Ascending aorta (tissue), 2 donors: ENCODE measurements at regions of chr12 and their contacts with region 1.

Region 1: GRCh38 chr12:69239352-69239921 is at the start of gene CPSF6:
- DNase-seq: peak; percentile 71 to 96
- H3K4me3 ChIP-seq: peak within 1 kb of the TSS; percentile 92 to 93
- H3K27ac ChIP-seq: peak within 1 kb of the TSS; percentile 90 to 94
- H3K4me1 ChIP-seq: peaks cover 0 to 19% of the 10 kb centered on the region in 2 donors
- H3K27me3 ChIP-seq: no peaks in the 10 kb centered on the region
- CTCF ChIP-seq: no peak
- total RNA-seq, gene CPSF6: 29.2 TPM

Region 2: DNA sequence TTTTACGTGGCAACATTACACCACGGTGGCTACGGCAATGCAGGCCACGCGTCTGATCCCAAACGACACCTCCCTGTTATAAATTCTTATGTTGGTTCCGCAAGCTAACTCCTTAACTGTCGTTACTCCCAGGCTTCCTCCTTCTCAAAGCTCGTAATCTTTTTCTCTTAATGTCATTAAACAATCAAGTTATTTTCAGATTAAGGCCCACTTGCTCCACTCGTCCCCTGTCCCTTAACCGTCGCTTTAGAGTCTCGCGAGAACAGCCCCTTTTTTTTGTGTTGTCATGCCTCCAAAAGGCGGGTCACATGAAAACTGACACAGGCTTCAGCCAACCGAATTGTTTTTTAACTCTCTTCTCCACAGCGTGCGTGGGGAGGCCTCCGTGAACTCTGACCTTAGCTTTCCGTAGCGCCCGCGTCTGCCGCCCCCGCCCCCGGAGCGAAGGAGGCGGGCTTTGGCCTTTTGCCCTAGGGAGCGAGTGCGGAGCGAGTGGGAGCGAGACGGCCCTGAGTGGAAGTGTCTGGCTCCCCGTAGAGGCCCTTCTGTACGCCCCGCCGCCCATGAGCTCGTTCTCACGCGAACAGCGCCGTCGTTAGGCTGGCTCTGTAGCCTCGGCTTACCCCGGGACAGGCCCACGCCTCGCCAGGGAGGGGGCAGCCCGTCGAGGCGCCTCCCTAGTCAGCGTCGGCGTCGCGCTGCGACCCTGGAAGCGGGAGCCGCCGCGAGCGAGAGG is 1970.4 kb before region 1 on chr12 and contains the start of gene CAND1:
- intact Hi-C with region 1: loop called (anchors 5 kb)
- DNase-seq: peak; percentile 90 to 99
- H3K4me3 ChIP-seq: peak within 1 kb of the TSS; percentile 78 to 96
- H3K27ac ChIP-seq: peak within 1 kb of the TSS; percentile 93 to 99
- H3K4me1 ChIP-seq: peaks cover 0 to 30% of the 10 kb centered on the region in 2 donors
- H3K27me3 ChIP-seq: no peaks in the 10 kb centered on the region
- CTCF ChIP-seq: no peak
- total RNA-seq, gene CAND1: 31.6 TPM

Region 3: DNA sequence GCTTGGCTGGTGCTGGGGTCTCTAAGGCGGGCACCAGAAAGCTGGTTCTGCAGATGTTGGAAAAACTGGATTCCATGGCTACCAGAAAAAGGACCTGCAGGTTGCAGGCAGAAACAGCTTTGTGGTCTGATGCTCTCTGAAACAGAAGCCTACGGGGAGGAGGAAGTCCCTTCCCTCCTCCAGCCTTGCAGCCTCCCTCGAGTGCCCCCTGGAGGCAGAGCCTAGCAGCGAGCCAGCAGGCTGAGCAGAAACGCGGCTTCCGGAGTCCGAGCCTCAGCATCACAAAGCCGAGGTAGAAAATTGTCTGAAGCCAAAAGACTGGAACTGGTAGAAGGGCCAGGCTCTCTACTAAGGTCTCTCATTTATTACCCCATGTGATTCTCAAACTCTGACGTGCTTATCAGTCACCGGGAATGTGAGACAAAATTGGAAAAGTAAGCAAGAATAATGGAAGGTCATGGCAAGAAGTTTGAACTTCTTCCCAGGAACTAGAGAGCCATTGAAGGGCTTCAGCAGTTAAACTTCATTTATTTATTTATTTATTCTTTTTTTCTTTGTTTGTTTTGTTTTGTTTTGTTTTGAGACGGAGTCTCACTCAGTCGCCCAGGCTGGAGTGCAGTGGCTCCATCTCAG is 82.3 kb before region 1 on chr12:
- intact Hi-C with region 1: loop called (anchors 5 kb)
- DNase-seq: peak; percentile 21 to 87
- H3K4me3 ChIP-seq: no peak overlapping the region
- H3K27ac ChIP-seq: no peak overlapping the region
- H3K4me1 ChIP-seq: peaks cover 0 to 4% of the 10 kb centered on the region in 2 donors
- H3K27me3 ChIP-seq: peaks cover 3% of the 10 kb centered on the region
- CTCF ChIP-seq: peak; percentile 34 to 81 (median 76)

Region 4: DNA sequence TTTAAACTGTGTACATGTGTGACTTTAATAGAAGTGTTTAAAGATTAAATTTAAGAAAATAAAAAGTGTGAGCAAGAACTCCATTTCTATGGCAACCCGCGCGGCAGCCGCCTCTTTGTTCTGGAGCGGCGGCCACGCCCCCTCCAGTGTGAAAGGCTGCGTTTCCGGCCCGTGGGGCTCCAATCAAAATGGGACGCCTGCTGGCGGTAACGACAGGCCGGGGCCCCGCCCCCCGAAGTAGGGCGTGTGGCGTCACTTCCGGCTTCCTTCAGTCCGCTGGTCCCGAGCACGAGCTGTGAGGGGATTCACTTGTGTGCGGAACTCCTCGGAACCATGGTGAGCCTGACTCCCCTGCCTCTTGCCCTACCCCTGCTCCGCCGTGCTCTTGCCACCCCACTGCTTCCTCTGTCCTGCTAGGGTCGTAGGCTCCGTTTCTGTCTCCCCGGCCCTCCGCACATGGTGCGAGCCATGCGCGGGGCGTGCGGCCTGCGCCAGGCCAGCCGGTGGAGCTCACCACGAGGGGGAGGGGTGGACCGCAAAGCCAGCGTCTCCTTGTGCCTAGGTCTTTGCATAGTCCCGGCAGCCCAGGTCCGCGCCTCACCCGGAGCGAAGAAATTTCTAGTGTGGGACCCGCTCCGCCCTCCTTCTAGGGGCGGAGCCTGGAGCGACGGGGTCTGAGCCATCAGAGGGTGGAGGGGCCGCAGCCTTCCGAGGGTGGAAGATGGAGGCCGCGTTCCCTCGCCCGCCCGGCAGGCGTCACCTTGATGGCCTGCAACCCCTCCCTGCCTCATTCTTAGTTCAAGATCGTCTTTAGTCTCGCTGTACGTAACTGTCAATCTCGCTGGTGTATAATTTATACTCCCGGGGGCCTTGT is 346.0 kb after region 1 on chr12 and contains the start of gene CCT2:
- intact Hi-C with region 1: loop called (anchors 1 kb)
- DNase-seq: peak; percentile 88 to 99
- H3K4me3 ChIP-seq: peak within 1 kb of the TSS; percentile 60 to 97
- H3K27ac ChIP-seq: peak within 1 kb of the TSS; percentile 79 to 86
- H3K4me1 ChIP-seq: peaks cover 6 to 8% of the 10 kb centered on the region in 2 donors
- H3K27me3 ChIP-seq: no peaks in the 10 kb centered on the region
- CTCF ChIP-seq: peak in 2 of 3 experiments; percentile 36 to 44
- total RNA-seq, gene CCT2: 65.0 TPM

Region 5: DNA sequence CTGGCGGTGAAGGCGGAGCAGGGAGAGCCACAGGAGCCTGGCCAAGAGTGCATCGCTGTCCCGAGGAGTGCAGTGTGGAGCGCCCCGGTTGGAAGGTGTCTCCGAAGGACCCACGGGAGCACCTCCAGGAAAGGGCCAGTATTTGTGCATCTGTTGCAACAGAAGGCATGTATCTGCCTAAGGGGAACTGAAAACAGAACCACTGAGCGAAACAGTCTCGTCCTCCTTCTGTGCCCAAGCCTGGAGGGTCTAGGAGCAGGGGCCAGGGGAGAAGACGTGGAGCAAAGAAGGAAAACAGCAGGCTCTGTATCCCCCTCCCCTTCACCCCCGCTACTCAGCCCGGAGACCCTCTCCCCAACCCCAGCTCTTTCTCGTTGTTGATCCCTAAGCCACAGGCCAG is 376.6 kb after region 1 on chr12:
- intact Hi-C with region 1: no loop called
- DNase-seq: no peak
- H3K4me3 ChIP-seq: no peak overlapping the region
- H3K27ac ChIP-seq: no peak overlapping the region
- H3K4me1 ChIP-seq: no peaks in the 10 kb centered on the region
- H3K27me3 ChIP-seq: no peaks in the 10 kb centered on the region
- CTCF ChIP-seq: no peak

Region 6: DNA sequence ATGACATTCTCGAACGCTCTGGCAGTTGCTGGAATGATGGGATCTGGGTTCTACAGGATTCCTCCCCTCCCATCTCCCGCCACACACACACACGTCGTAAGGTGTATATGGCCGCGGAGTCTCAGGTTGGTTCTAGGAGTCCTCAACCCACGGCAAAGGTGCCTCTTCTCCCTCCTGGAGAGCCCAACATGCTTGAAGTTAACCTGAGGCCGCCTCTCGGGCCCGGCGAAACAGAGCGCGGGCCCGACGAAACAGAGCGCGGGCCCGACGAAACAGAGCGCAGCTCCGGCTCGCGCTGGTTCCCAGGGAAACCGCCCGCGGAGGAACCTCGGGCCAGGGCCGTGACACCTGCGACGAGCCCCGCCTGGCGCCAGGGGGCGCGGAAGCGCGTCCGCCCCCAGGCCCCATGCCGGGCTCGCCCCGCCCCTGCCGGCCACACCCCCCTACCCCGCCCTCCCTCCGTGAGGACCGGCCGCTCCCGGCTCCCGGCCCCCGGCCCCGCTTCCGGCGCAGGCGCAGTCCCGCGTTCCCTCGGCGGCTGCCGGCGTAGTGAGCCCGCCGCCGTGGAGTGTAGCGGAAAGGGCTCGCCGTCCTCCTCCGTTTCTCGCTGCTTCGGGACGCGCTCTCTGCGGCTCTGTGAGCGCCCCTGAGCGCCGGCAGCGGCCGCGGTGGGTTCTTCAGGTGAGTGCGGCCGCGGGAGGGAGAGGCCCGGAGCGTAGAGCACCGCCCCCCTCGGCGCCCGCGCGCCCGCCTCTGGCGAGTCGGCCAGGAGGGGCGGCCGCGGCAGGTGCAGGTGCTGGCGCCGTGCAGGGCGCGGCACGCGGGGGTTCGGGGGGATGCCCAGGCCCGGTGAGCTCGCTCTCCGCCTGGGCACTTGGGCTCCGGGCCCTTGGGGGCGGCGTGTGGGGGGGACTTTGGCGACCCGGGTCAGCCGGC is 499.2 kb after region 1 on chr12 and contains the start of gene RAB3IP:
- intact Hi-C with region 1: loop called (anchors 1 kb)
- DNase-seq: peak; percentile 35 to 87
- H3K4me3 ChIP-seq: peak within 1 kb of the TSS; percentile 92 to 95
- H3K27ac ChIP-seq: peak within 1 kb of the TSS; percentile 15 to 53
- H3K4me1 ChIP-seq: peaks cover 0 to 7% of the 10 kb centered on the region in 2 donors
- H3K27me3 ChIP-seq: no peaks in the 10 kb centered on the region
- CTCF ChIP-seq: peak; percentile 25 to 63 (median 51)
- total RNA-seq, gene RAB3IP: 17.2 TPM